A673 (cell line): ENCODE measurements at regions of chr1 and their contacts with region 1.

Region 1: GRCh38 chr1:174606471-174606870 is 158.7 kb downstream of the GPR52 start:
- DNase-seq: no peak
- H3K4me3 ChIP-seq: no peak overlapping the region
- H3K27ac ChIP-seq: no peak overlapping the region
- H3K4me1 ChIP-seq: no peaks in the 10 kb centered on the region
- H3K27me3 ChIP-seq: no peaks in the 10 kb centered on the region
- CTCF ChIP-seq: no peak

Region 2: GRCh38 chr1:174448974-174449373 is 157.5 kb before region 1 on chr1:
- CTCF ChIA-PET with region 1: no interaction called
- POLR2A ChIA-PET with region 1: no interaction called
- intact Hi-C with region 1: no loop called
- DNase-seq: no peak
- H3K4me3 ChIP-seq: no peak overlapping the region
- H3K27ac ChIP-seq: no peak overlapping the region
- H3K4me1 ChIP-seq: no peaks in the 10 kb centered on the region
- H3K27me3 ChIP-seq: no peaks in the 10 kb centered on the region
- CTCF ChIP-seq: no peak

Region 3: GRCh38 chr1:174626031-174627025 is 19.9 kb after region 1 on chr1:
- CTCF ChIA-PET with region 1: no interaction called
- POLR2A ChIA-PET with region 1: no interaction called
- intact Hi-C with region 1: loop called (anchors 2 kb)
- DNase-seq: no peak
- H3K4me3 ChIP-seq: no peak overlapping the region
- H3K27ac ChIP-seq: no peak overlapping the region
- H3K4me1 ChIP-seq: no peaks in the 10 kb centered on the region
- H3K27me3 ChIP-seq: no peaks in the 10 kb centered on the region
- CTCF ChIP-seq: no peak

Region 4: GRCh38 chr1:174850726-174851125 is 244.3 kb after region 1 on chr1:
- CTCF ChIA-PET with region 1: no interaction called
- POLR2A ChIA-PET with region 1: no interaction called
- intact Hi-C with region 1: no loop called
- DNase-seq: no peak
- H3K4me3 ChIP-seq: no peak overlapping the region
- H3K27ac ChIP-seq: no peak overlapping the region
- H3K4me1 ChIP-seq: no peaks in the 10 kb centered on the region
- H3K27me3 ChIP-seq: no peaks in the 10 kb centered on the region
- CTCF ChIP-seq: no peak